ENCODE measurements at regions of chr22 and their contacts with region 1.

Region 1: DNA sequence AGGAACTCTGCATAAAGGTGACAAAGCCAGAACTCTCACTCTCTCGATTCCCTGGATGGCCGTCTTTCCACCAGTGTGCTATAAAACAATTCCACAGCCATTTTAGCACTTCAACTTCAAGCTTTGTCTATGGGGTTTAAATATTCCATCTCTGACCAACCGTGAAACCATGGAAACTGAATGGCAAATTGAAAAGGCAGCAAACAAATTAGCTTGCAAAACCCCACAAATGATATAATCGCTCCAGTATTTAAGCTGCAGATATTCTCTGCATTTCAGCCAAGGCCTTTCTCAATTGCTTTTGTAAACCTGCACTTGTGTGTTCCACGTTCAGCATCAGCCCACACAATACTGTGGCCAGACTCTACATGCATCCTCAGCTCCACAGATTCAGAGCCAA is 131.7 kb upstream of the ISX start:
- DNase-seq: no peak
- H3K4me3 ChIP-seq: no peak overlapping the region
- H3K27ac ChIP-seq: no peak overlapping the region
- H3K4me1 ChIP-seq: no peaks in the 10 kb centered on the region
- H3K27me3 ChIP-seq: peaks cover 51% of the 10 kb centered on the region
- CTCF ChIP-seq: no peak

Region 2: GRCh38 chr22:34804604-34805003 is 129.7 kb before region 1 on chr22:
- intact Hi-C with region 1: no loop called
- DNase-seq: no peak
- H3K4me3 ChIP-seq: no peak overlapping the region
- H3K27ac ChIP-seq: no peak overlapping the region
- H3K4me1 ChIP-seq: no peaks in the 10 kb centered on the region
- H3K27me3 ChIP-seq: peaks cover 84% of the 10 kb centered on the region
- CTCF ChIP-seq: no peak

Region 3: GRCh38 chr22:34878996-34879395 is 55.3 kb before region 1 on chr22:
- intact Hi-C with region 1: loop called (anchors 10 kb)
- DNase-seq: no peak
- H3K4me3 ChIP-seq: no peak overlapping the region
- H3K27ac ChIP-seq: no peak overlapping the region
- H3K4me1 ChIP-seq: peaks cover 3% of the 10 kb centered on the region
- H3K27me3 ChIP-seq: peaks cover 20% of the 10 kb centered on the region
- CTCF ChIP-seq: no peak

Region 4: DNA sequence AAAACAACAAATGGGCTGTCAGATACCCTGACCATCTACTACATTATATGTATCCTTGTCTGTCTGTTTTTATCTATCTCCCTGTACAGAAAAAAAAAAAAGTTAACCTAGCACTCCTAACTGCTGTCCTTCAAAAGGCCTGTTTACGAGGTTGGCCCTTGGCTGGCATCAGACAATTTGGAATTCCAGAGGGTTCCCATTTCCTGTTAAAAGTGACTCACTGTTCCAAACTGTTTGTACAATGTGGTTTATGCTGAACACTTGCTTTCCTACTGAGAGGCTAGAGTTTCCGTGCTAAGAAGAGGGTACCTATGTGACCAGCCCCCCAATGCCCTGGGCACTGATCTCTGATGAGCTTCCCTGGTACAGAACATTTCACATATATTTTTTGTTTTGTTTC is 257.2 kb after region 1 on chr22:
- intact Hi-C with region 1: no loop called
- DNase-seq: no peak
- H3K4me3 ChIP-seq: no peak overlapping the region
- H3K27ac ChIP-seq: no peak overlapping the region
- H3K4me1 ChIP-seq: no peaks in the 10 kb centered on the region
- H3K27me3 ChIP-seq: peaks cover 13% of the 10 kb centered on the region
- CTCF ChIP-seq: no peak

Measured in left ventricle myocardium inferior (tissue), 1 donor.